ENCODE measurements at regions of chr5 and their contacts with region 1.

Region 1: DNA sequence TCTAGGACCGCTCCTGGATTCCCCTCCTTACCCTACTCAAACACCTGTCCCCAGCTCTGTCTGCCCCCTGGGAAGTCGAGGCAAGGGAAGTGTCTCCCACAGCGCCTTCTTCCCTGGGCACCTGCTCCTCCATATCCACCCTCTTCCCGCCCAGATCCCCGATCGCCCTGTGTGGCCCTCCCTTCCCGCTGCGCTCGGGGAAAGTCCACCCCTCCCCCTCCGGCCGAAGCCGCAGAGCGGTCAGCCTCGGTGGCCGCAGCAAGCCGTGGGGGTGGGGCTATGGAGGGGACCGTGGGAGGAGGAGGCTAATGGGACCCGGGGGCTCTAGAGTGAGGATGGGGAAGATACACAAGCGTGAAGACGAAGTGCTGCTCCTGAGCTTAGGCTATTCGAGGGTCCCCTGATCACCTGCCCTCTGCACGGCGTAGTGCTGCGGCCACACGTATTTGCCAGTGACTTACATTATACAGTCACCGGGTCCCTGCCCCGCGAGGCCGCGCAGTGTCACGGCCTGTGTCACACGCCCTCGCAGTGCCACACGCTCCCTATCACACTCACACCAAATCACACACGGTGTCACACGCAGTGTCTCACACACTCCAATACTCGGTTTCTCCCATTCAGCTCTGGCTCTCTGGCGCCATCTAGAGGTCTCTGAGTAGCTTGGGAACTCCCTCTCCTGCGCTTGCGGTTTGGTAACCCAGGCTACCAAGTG is 658 bp upstream of the PCDH1 start:
- DNase-seq: peak; percentile 74
- H3K4me3 ChIP-seq: peak overlapping the region; percentile 55 to 63
- H3K27ac ChIP-seq: no peak overlapping the region; a peak in 1 of 4 replicates
- H3K4me1 ChIP-seq: peaks cover 4 to 69% of the 10 kb centered on the region in 2 experiments; a peak in 2 of 4 replicates
- H3K27me3 ChIP-seq: peaks cover 78% of the 10 kb centered on the region
- CTCF ChIP-seq: peak; percentile 96
- EP300 ChIP-seq: no peak
- RAD21 ChIP-seq: peak; percentile 95

Region 2: DNA sequence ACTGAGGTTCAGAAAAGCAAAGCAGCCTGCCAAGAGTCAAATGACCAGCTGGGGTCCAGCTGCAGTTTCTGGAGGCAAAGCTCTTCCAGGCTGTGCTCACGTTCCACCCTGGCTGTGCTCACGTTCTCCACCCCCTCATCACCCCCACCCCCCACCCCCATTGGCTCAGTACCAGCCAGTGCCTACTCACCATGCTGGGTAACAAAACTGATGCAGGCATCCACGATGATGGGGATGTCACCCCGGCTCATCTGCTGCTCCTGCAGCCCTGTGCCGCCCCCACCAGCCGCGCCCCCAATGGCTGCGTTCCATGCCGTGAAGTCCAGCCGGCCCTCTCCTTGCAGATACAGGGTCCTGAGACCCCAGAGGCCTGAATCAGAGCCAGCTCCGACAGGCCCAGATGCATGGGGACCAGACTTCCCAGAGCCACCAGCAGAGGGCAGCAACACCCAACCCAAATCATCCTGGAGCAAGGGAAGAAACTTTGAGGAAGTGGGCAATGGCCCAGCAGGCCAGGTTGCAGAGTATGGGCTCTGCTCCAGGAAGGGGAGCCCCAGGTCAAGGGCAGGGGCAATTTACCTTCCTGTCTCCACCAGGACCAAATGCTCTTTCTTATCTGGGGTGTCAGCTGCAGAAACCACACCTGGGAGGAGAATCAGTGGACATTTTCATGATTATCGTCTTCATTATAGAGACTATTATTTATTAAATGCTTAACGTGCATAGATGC is 214.0 kb before region 1 on chr5:
- CTCF ChIA-PET with region 1: interaction called, 12 read pairs
- POLR2A ChIA-PET with region 1: no interaction called
- DNase-seq: peak; percentile 90
- H3K4me3 ChIP-seq: no peak overlapping the region; a peak in 1 of 4 replicates
- H3K27ac ChIP-seq: no peak overlapping the region
- H3K4me1 ChIP-seq: no peaks in the 10 kb centered on the region; a peak in 1 of 4 replicates
- H3K27me3 ChIP-seq: no peaks in the 10 kb centered on the region
- CTCF ChIP-seq: peak; percentile 89
- EP300 ChIP-seq: no peak
- RAD21 ChIP-seq: peak; percentile 83

Region 3: DNA sequence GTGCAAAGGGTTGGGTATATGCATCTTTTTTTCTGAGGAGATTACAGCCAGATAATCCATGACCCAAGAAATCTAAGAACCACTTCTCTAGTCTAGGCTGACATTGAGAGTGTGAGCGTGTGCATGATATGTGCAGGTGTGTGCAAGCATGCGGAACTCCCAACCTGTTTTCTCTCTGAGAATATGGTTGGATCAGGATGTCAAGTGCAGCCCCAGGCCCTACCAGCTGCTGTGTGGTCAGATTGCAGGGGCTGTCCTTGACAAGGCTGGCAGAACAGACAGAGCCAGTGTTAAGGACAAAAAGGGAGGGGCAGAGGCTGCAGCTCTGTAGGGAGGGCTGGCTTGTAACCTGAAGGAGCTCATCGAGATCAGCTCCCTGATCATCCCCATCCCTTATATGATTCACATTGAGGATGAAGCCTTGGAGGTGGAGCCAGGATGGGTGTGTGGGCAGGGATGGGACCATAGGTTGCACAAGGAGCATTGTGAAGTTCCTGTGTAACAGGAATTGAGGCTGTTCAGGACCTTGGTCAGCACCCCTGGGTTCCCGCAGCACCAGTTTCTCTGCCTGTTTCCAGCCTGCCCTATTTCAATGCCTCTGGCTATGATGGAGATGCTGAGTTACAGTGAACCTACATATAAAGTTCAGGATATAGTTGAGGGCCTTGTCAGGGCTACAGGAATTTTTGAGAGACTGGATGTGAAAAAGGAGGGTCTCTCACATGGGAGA is 144.2 kb before region 1 on chr5:
- CTCF ChIA-PET with region 1: interaction called, 35 read pairs
- POLR2A ChIA-PET with region 1: interaction called, 4 read pairs
- DNase-seq: peak; percentile 41
- H3K4me3 ChIP-seq: no peak overlapping the region
- H3K27ac ChIP-seq: no peak overlapping the region
- H3K4me1 ChIP-seq: peaks cover 0 to 67% of the 10 kb centered on the region in 2 experiments; a peak in 2 of 4 replicates
- H3K27me3 ChIP-seq: peaks cover 10% of the 10 kb centered on the region
- CTCF ChIP-seq: no peak
- EP300 ChIP-seq: no peak
- RAD21 ChIP-seq: no peak; the same call in 1 of the 2 replicates

Region 4: DNA sequence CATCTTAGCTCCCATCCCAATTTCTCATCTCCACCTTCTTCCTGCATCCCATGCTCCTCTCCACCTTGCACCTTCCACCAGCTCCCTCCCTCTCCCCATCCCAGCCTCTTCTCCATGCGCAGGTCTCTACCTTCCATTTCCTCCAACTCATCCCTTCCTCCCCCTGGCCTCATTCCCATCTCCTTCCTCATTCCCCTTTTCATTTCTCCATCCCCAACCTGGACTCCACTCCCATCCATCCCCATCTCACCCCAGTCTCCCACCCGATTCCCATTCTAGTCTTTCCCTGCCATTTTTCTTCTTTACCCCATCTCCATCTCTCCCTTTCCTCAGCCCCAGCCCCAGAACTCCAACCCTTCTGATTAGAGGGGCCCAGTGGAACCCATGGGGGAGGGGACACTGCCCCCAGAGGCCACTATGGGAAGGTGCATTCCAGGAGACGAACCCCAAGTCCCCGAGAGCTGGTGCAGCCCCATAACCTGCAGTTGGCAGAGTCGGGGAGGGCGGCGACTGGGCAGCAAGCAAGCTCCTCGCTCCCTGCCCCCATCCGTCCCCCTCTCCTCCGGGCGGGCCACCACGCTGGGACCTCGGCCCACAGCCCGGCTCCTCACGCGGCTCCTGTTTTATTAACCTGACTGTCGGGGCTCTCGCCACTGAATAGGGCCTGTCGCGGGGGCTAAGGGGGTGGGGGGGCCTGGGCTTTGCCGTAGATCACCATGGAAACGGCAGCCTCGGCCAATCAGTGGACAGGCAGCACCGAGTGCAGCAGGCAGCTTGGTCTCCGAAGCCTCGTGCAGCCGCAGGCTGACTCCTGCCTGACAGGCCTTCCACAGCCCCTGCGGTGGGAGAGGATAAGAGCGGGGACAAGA is 67.3 kb before region 1 on chr5:
- CTCF ChIA-PET with region 1: interaction called, 164 read pairs
- POLR2A ChIA-PET with region 1: interaction called, 3 read pairs
- DNase-seq: peak; percentile 86
- H3K4me3 ChIP-seq: peak overlapping the region in 1 of 2 experiments; percentile 24; a peak in 2 of 4 replicates
- H3K27ac ChIP-seq: no peak overlapping the region
- H3K4me1 ChIP-seq: peaks cover 0 to 16% of the 10 kb centered on the region in 2 experiments; a peak in 1 of 4 replicates
- H3K27me3 ChIP-seq: peaks cover 19% of the 10 kb centered on the region
- CTCF ChIP-seq: peak; percentile 75
- EP300 ChIP-seq: no peak
- RAD21 ChIP-seq: peak; percentile 52; the same call in 1 of the 2 replicates

Region 5: GRCh38 chr5:141855265-141856036 is 23.4 kb before region 1 on chr5:
- CTCF ChIA-PET with region 1: interaction called, 31 read pairs
- POLR2A ChIA-PET with region 1: interaction called, 4 read pairs
- DNase-seq: peak; percentile 95
- H3K4me3 ChIP-seq: no peak overlapping the region
- H3K27ac ChIP-seq: peak overlapping the region in 1 of 2 experiments; percentile 23; a peak in 1 of 4 replicates
- H3K4me1 ChIP-seq: peaks cover 0 to 17% of the 10 kb centered on the region in 2 experiments; a peak in 1 of 4 replicates
- H3K27me3 ChIP-seq: peaks cover 8% of the 10 kb centered on the region; the same call in 1 of the 2 replicates
- CTCF ChIP-seq: no peak
- EP300 ChIP-seq: no peak
- RAD21 ChIP-seq: no peak

Region 6: DNA sequence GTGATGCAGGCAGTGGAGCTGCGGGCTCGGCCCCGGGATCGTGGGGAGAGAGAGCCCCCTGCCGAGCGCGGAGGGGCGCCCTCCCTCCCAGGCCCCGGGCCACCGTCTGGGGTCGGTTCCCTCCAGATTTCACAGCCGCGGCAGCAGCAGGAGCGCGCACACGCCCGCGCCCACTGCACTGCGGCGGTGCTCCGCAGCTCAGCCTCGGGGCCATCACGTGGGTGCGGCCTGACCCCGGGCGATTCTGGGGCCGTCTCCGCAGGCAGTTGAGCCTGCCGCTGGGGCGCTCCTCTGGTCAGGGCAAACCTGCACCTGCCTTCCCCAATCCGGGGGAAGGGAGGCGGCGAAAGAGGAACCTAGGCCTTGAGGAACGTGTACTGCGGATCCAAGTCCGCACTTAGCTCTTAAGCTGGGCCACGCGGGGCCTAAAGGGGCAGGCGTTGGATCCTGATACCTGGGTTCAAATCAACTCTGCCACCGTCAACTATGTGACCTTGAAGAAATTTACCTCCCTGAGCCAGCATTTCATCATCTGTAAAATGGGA is 35.4 kb after region 1 on chr5:
- CTCF ChIA-PET with region 1: interaction called, 78 read pairs
- POLR2A ChIA-PET with region 1: no interaction called
- DNase-seq: peak; percentile 94
- H3K4me3 ChIP-seq: peak overlapping the region in 1 of 2 experiments; percentile 4; a peak in 1 of 4 replicates
- H3K27ac ChIP-seq: no peak overlapping the region
- H3K4me1 ChIP-seq: peaks cover 0 to 4% of the 10 kb centered on the region in 2 experiments; a peak in 1 of 4 replicates
- H3K27me3 ChIP-seq: no peaks in the 10 kb centered on the region; the same call in 1 of the 2 replicates
- CTCF ChIP-seq: no peak
- EP300 ChIP-seq: no peak
- RAD21 ChIP-seq: peak; percentile 75

Region 7: GRCh38 chr5:141978389-141978788 is 99.5 kb after region 1 on chr5:
- CTCF ChIA-PET with region 1: no interaction called
- POLR2A ChIA-PET with region 1: no interaction called
- DNase-seq: no peak
- H3K4me3 ChIP-seq: no peak overlapping the region
- H3K27ac ChIP-seq: no peak overlapping the region
- H3K4me1 ChIP-seq: peaks cover 8% of the 10 kb centered on the region in 2 experiments; a peak in 3 of 4 replicates
- H3K27me3 ChIP-seq: no peaks in the 10 kb centered on the region
- CTCF ChIP-seq: no peak
- EP300 ChIP-seq: no peak
- RAD21 ChIP-seq: no peak

Measured in SK-N-SH (cell line).